HEK293 (cell line): ENCODE measurements at regions of chr17 and their contacts with region 1.

Region 1: GRCh38 chr17:15966183-15966878 is 21.4 kb downstream of the ADORA2B start:
- H3K4me3 ChIP-seq: no peak overlapping the region
- H3K27ac ChIP-seq: peak overlapping the region; percentile 58
- H3K4me1 ChIP-seq: peaks cover 22% of the 10 kb centered on the region
- CTCF ChIP-seq: no peak

Region 2: DNA sequence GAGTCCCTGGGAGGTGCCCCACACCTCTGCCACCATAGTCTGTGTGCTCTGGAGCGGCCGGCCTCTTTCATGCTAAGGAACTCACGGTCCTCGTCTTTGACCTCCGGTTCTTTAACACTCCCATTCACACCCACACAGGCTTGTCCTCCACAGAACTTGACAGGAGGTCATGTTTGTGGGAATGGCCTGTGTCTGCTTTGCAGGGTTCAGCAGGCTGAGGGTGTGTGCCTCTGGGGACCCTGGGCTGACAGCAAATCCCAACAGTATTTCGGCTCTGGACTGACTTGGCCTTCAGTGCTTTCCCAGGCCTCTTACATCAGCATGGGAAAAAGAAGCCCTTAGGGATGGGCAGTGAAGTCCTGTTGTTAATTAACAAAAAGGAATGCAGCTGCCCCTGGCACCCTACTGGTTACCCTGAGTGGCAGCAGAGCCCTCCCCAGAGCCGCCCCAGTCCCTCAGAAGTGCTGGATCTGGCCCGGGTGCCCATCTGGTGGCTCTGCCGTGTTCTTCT is 56.8 kb before region 1 on chr17:
- CTCF ChIA-PET with region 1: no interaction called
- POLR2A ChIA-PET with region 1: no interaction called
- H3K4me3 ChIP-seq: no peak overlapping the region
- H3K27ac ChIP-seq: no peak overlapping the region
- H3K4me1 ChIP-seq: no peaks in the 10 kb centered on the region
- CTCF ChIP-seq: no peak

Region 3: DNA sequence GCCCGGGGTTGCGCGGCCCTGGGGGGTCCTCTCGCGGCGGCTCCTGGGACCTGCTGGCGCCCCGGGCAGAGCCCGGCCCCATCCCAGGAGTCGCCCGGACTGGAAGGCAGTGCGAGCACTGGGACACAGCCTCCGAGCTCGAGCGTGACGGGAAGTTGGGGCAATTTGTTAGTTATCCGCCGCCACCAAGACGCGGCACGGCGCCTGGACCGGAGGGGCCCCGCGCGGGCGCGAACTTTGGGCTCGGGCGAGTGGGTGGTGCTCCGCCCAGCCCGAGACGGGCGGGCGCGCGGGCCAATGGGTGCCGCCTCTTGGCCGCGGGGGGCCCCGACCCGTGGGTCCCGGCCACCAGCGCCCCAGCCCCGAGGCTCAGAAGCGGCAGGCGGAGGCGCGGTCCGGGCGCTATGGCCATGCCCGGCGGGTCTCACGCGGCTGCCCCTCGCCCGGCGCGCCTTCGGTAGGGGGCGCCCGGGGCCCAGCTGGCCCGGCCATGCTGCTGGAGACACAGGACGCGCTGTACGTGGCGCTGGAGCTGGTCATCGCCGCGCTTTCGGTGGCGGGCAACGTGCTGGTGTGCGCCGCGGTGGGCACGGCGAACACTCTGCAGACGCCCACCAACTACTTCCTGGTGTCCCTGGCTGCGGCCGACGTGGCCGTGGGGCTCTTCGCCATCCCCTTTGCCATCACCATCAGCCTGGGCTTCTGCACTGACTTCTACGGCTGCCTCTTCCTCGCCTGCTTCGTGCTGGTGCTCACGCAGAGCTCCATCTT is 21.4 kb before region 1 on chr17 and contains the start of gene ADORA2B:
- CTCF ChIA-PET with region 1: interaction called, 11 read pairs
- POLR2A ChIA-PET with region 1: no interaction called
- H3K4me3 ChIP-seq: peak within 1 kb of the TSS; percentile 62
- H3K27ac ChIP-seq: peak within 1 kb of the TSS; percentile 37; the same call in 1 of the 2 replicates
- H3K4me1 ChIP-seq: peaks cover 5% of the 10 kb centered on the region
- CTCF ChIP-seq: peak; percentile 77

Region 4: DNA sequence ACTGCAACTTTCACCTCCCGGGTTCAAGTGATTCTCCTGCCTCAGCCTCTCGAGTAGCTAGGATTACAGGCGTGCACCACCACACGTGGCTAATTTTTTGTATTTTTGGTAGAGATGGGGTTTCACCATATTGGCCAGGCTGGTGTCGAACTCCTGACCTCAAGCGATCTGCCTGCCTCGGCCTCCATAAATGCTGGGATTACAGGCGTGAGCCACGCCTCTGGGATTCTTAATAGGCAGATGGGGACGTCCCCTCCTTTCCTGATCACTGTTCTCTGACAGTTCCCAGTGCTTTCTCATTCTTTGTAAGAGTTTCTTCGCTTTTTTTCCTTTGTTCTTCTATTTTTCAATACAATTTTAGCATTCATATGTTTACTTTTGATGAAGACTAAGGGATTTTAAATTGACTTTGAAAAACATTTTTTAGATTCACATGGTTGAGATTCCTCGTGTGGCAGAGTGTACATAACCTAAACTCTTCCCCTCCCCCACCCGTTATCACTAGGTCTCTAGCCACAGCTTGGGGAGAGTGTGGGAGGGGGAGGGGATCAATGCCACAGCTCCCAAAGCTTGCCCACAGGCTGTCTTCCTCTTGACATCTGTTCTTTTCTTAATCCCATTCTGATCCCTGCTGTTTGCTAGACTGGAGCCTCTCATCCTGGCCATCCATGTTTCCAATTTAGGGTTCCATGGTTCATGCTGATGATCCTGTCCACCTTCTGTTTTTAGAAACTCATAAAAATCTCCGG is 10.4 kb before region 1 on chr17:
- CTCF ChIA-PET with region 1: interaction called, 4 read pairs
- POLR2A ChIA-PET with region 1: interaction called, 10 read pairs
- H3K4me3 ChIP-seq: no peak overlapping the region
- H3K27ac ChIP-seq: no peak overlapping the region
- H3K4me1 ChIP-seq: no peaks in the 10 kb centered on the region; the same call in none of the 2 replicates
- CTCF ChIP-seq: no peak